Activated B cell treated with CpG ODN at 0.5 μM for 24 hours (primary cell): ENCODE measurements at regions of chr3 and their contacts with region 1.

Region 1: GRCh38 chr3:105764378-105765307 is 104.2 kb downstream of the CBLB start:
- DNase-seq: no peak
- ATAC-seq: peak; percentile 50
- H3K4me3 Mint-ChIP-seq: no peak overlapping the region
- H3K27ac Mint-ChIP-seq: peak overlapping the region; percentile 43
- H3K4me1 Mint-ChIP-seq: peaks cover 43% of the 10 kb centered on the region
- H3K27me3 Mint-ChIP-seq: no peaks in the 10 kb centered on the region
- CTCF ChIP-seq: no peak

Region 2: DNA sequence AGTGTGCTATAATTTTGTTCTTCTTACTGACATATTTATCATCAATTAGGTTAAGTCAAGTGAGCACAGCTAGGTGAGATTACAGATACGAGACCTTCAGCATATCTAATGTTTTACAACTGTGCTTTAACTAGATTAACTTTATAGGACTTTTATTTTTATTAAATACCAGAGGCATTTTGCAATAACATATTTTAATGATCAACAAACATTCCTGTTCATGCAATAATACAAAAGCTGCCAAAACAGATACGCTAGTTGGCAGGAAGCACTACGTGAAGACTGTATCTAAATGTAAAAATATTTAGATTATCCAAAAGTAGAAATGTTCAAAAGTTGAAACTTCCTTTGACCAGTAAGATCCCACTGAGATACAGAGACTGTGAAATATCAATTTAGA is 35.0 kb before region 1 on chr3:
- CTCF ChIA-PET with region 1: no interaction called
- POLR2A ChIA-PET with region 1: no interaction called
- intact Hi-C with region 1: loop called (anchors 5 kb)
- DNase-seq: no peak
- ATAC-seq: no peak
- H3K4me3 Mint-ChIP-seq: no peak overlapping the region
- H3K27ac Mint-ChIP-seq: no peak overlapping the region
- H3K4me1 Mint-ChIP-seq: peaks cover 16% of the 10 kb centered on the region
- H3K27me3 Mint-ChIP-seq: no peaks in the 10 kb centered on the region
- CTCF ChIP-seq: no peak

Region 3: DNA sequence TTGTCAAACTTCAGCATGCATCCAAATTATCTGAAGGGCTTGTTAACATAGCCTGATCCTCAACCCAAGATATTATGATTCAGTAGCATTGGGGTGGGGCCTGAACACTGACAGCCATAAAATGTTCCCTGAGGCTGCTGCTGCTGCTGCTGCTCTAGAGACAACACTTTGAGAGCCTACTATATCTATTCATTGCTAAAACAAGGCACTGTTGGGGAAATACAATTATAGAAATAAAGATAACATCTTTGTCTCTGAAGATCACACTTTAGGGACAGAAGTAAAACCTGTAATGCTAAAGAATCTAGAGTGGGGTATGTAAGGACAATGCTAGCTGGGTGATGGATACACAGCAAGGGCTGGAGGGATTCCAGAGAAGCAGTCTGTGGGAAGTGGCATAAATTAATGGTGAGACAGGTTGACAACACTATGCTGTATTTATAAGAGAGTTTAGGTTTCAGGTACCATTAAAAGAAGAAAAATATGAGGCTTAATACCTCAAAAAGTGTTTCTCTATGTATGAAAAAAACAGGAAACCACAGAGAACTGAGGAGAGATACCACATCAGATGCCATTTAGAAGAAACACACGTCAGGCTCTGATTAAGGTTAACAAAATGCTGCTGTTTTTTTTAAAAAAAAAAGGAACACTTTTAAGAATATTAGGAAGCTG is 11.8 kb before region 1 on chr3:
- CTCF ChIA-PET with region 1: no interaction called
- POLR2A ChIA-PET with region 1: no interaction called
- intact Hi-C with region 1: loop called (anchors 2 kb)
- DNase-seq: no peak
- ATAC-seq: peak; percentile 51
- H3K4me3 Mint-ChIP-seq: peak overlapping the region; percentile 33
- H3K27ac Mint-ChIP-seq: peak overlapping the region; percentile 65
- H3K4me1 Mint-ChIP-seq: peaks cover 53% of the 10 kb centered on the region
- H3K27me3 Mint-ChIP-seq: no peaks in the 10 kb centered on the region
- CTCF ChIP-seq: no peak

Region 4: DNA sequence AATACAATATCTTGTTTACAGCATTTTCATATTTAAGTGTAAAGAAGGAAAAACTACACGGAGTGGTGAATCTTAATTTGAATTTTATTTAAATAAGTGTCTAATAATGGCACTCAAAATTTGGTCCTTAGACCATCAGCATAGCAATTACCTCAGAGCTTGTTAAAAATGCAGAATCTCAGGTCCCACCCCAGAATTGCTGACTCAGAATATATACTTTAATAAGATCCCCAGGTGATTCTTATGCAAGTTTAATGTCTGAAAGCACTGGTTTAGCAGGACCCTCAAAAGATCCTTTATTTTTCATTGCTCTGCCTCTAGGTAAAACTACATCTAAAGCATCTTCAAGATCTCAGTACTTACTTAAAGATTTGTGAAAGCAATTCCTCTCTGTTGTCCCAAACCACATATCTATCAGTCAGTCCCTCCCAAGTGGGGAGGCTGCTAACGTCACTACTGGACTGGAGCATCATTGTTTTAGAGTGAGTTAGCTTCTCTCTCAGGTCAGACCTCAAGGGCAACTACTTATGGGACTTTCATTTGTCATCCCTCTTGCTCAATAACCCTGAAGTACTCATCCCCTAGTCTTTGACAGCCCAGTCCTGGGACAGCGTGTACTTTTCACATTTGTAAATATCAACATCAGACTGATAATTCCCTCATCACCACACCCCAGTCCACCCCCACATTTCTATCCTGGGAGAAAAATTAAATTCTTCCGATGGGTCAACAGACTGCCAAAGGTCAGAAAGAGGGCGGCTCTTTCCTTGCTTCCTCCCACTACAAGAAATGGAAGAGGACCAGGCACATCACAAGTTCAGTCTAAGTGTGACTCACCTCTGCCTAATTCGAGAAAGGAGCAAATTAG is 27.5 kb after region 1 on chr3:
- CTCF ChIA-PET with region 1: no interaction called
- POLR2A ChIA-PET with region 1: no interaction called
- intact Hi-C with region 1: loop called (anchors 2 kb)
- DNase-seq: no peak
- ATAC-seq: no peak
- H3K4me3 Mint-ChIP-seq: no peak overlapping the region
- H3K27ac Mint-ChIP-seq: no peak overlapping the region
- H3K4me1 Mint-ChIP-seq: peaks cover 40% of the 10 kb centered on the region
- H3K27me3 Mint-ChIP-seq: no peaks in the 10 kb centered on the region
- CTCF ChIP-seq: no peak